PC-3 (cell line): ENCODE measurements at regions of chr14 and their contacts with region 1.

Region 1: GRCh38 chr14:32576088-32576795 is 247.1 kb downstream of the AKAP6 start:
- DNase-seq: peak; percentile 75
- ATAC-seq: peak; percentile 95
- H3K4me3 ChIP-seq: no peak overlapping the region
- H3K27ac ChIP-seq: no peak overlapping the region
- H3K4me1 ChIP-seq: no peaks in the 10 kb centered on the region
- H3K27me3 ChIP-seq: no peaks in the 10 kb centered on the region
- CTCF ChIP-seq: peak; percentile 96

Region 2: GRCh38 chr14:32453857-32454810 is 122.1 kb before region 1 on chr14:
- CTCF ChIA-PET with region 1: no interaction called
- POLR2A ChIA-PET with region 1: no interaction called
- intact Hi-C with region 1: no loop called
- DNase-seq: no peak
- ATAC-seq: no peak
- H3K4me3 ChIP-seq: no peak overlapping the region
- H3K27ac ChIP-seq: no peak overlapping the region
- H3K4me1 ChIP-seq: no peaks in the 10 kb centered on the region
- H3K27me3 ChIP-seq: no peaks in the 10 kb centered on the region
- CTCF ChIP-seq: no peak

Region 3: GRCh38 chr14:32998433-32998832 is 422.2 kb after region 1 on chr14:
- CTCF ChIA-PET with region 1: no interaction called
- POLR2A ChIA-PET with region 1: no interaction called
- intact Hi-C with region 1: loop called (anchors 1 kb)
- DNase-seq: peak; percentile 43
- ATAC-seq: peak; percentile 57
- H3K4me3 ChIP-seq: no peak overlapping the region
- H3K27ac ChIP-seq: no peak overlapping the region
- H3K4me1 ChIP-seq: no peaks in the 10 kb centered on the region
- H3K27me3 ChIP-seq: no peaks in the 10 kb centered on the region
- CTCF ChIP-seq: peak; percentile 61

Region 4: GRCh38 chr14:33657476-33657875 is 1081.2 kb after region 1 on chr14:
- CTCF ChIA-PET with region 1: no interaction called
- POLR2A ChIA-PET with region 1: no interaction called
- intact Hi-C with region 1: loop called (anchors 10 kb)
- DNase-seq: peak; percentile 32
- ATAC-seq: peak; percentile 71
- H3K4me3 ChIP-seq: no peak overlapping the region
- H3K27ac ChIP-seq: no peak overlapping the region
- H3K4me1 ChIP-seq: peaks cover 25% of the 10 kb centered on the region
- H3K27me3 ChIP-seq: no peaks in the 10 kb centered on the region
- CTCF ChIP-seq: no peak

Region 5: DNA sequence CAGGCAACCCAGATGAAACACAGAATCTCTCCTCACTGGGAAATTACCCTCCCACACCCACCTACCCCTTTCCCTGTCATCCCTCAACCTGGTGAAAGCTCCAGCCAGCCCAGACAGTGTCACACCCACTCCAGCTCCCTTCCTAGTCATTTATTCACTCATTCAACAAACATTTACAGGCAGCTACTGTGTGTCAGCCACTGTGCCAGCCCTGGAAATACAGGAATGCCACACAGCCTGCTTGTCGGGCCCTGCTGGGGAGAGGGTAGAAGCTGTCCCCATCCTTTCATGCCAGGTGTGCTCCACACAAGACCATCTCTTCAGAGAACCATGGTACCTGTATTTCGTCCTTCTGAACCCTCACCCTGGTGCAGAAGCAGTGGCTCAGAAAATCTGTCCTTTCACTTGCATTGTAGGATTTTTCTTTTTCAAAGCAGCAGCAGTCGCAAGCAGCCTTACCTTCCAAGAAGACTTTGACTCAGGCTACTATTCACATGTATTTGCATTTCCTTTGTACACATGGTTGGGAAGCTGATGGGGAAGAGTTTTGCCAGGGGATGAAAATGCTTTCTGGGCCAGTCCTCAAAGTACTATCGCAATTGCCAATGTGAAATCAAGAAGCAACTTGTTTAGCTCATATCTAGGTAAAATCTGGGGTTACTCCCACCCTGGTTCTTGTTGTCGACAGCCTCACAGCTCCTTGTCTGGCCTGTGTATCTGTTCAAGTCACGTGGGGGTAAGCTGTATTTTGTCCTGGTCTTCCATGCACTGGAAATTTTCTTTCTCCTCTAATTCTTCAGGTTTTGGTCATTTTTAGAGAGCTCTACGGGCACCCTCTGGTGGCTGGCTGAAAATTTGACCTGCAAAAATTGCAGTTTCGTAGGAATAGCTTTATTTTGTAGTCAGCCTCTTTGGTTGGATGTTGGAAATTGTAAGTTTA is 1522.1 kb after region 1 on chr14:
- CTCF ChIA-PET with region 1: no interaction called
- POLR2A ChIA-PET with region 1: no interaction called
- intact Hi-C with region 1: loop called (anchors 1 kb)
- DNase-seq: peak; percentile 79
- ATAC-seq: peak; percentile 88
- H3K4me3 ChIP-seq: no peak overlapping the region
- H3K27ac ChIP-seq: no peak overlapping the region
- H3K4me1 ChIP-seq: peaks cover 17% of the 10 kb centered on the region
- H3K27me3 ChIP-seq: no peaks in the 10 kb centered on the region
- CTCF ChIP-seq: peak; percentile 89

Region 6: GRCh38 chr14:34322940-34323418 is 1746.7 kb after region 1 on chr14:
- CTCF ChIA-PET with region 1: no interaction called
- POLR2A ChIA-PET with region 1: no interaction called
- intact Hi-C with region 1: loop called (anchors 1 kb)
- DNase-seq: peak; percentile 68
- ATAC-seq: peak; percentile 73
- H3K4me3 ChIP-seq: no peak overlapping the region
- H3K27ac ChIP-seq: no peak overlapping the region
- H3K4me1 ChIP-seq: peaks cover 5% of the 10 kb centered on the region; the same call in 1 of the 2 replicates
- H3K27me3 ChIP-seq: peaks cover 11% of the 10 kb centered on the region; the same call in 1 of the 2 replicates
- CTCF ChIP-seq: peak; percentile 92